Sigmoid colon (tissue), 7 donors: ENCODE measurements at regions of chr5 and their contacts with region 1.

Region 1: DNA sequence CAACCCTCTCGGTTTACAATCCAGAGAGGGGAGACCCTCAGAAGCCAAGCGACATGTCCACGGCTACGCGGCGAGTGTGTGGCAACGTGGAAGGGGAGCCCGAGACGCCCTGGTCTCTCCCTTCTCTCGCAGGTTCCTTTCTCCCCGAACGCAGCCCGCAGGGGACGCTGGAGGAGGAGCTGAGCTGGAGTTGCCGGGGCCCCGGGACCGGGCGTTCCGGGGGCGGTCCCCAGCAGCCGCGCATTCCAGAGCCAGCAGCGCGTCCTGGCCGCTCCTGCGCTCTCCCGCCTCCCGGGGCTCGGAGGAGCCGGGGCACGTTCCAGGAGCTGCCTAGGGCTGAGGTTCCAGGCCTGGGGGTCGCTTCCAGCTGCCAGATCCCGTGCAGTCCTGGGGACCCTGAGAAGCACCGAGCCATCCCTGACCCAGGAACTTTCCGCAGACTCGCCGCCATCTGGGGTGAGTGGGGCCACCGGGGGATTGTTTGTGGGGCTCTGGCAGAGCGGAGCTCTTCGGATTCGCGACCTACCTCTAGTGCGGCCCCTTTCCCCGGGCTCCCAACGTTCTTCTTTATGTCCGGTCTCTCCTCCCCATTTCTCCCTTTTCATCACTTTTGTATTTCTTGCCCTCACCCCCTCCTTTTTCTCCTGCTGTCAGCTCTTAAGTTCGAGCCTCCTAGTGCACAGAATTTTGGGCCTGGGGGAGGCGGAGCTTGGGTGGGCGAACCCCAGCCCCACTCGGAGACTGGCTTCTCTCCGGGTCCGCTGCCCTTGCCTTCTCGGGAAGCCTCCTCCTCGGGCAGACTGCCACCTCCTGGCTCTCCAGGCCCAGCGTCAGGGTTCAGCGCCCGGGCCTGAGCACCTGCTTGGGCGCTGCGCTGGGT is at the start of gene SMIM3:
- DNase-seq: peak; percentile 94
- H3K4me3 ChIP-seq: peak within 1 kb of the TSS; percentile 70 to 81 (median 74)
- H3K27ac ChIP-seq: peak within 1 kb of the TSS; percentile 91 to 95 (median 94)
- H3K4me1 ChIP-seq: peaks cover 0 to 53% (median 48%) of the 10 kb centered on the region in 4 donors
- H3K27me3 ChIP-seq: no peaks in the 10 kb centered on the region
- CTCF ChIP-seq: peak in 2 of 4 experiments; percentile 13 to 23
- EP300 ChIP-seq: no peak
- POLR2A ChIP-seq: peak; percentile 75 to 78
- total RNA-seq, gene SMIM3: 29.6 to 46.7 (median 43.6) TPM

Region 2: GRCh38 chr5:150700594-150701293 is 78.0 kb before region 1 on chr5 and contains the start of gene RBM22:
- intact Hi-C with region 1: loop called (anchors 2 kb)
- DNase-seq: peak; percentile 96
- H3K4me3 ChIP-seq: peak within 1 kb of the TSS; percentile 75 to 96 (median 92)
- H3K27ac ChIP-seq: peak within 1 kb of the TSS; percentile 94 to 98 (median 96)
- H3K4me1 ChIP-seq: peaks cover 0 to 22% (median 16%) of the 10 kb centered on the region in 4 donors
- H3K27me3 ChIP-seq: no peaks in the 10 kb centered on the region
- CTCF ChIP-seq: peak; percentile 52 to 73 (median 63)
- EP300 ChIP-seq: peak in 1 of 4 donors; percentile 18
- POLR2A ChIP-seq: peak; percentile 56 to 60
- total RNA-seq, gene RBM22: 30.0 to 34.1 (median 31.8) TPM

Region 3: DNA sequence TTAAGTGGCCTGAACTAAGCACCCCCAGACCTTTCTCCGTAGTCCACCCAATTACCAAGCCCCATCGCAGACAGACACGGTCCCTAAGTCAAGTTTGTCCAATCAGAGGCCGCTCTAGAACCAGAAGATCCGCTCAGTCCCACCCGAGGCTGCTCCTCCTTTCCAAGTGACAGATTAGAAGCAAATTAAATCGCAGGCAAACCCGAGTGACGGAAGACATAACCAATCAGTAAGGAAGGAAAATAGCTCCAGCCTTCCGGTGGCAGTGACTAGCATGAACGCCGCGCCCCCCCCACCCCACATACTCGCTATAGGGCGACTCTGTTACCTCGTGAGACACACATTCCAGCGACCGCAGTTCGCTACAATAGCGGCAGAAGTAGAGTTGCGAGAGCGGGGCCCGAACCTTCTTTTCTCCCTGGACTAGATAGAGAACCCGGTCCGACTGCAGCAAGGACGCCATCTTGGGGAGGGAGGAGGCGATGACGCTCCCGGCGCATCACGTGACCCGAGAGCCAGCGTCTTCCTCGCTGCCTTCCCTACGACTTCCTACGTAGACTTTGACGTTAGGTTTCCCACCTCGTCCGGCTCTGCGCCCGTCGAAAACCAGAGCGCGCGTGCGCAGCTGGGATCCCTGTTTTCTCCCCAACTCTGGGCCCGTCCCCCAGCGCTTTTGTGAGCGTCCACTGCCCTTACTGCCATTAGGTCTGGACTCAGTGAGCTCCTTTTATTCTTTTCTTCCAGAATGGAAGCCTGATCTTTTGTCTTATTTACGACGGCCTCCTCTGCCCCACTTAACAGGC is 20.0 kb before region 1 on chr5 and contains the start of gene DCTN4:
- intact Hi-C with region 1: loop called (anchors 1 kb)
- DNase-seq: peak; percentile 99
- H3K4me3 ChIP-seq: peak within 1 kb of the TSS; percentile 57 to 69 (median 66)
- H3K27ac ChIP-seq: peak within 1 kb of the TSS; percentile 93 to 95 (median 94)
- H3K4me1 ChIP-seq: peaks cover 0 to 27% (median 15%) of the 10 kb centered on the region in 4 donors
- H3K27me3 ChIP-seq: no peaks in the 10 kb centered on the region
- CTCF ChIP-seq: no peak
- EP300 ChIP-seq: peak in 2 of 4 donors; percentile 29 to 79
- POLR2A ChIP-seq: peak; percentile 37 to 39
- total RNA-seq, gene DCTN4: 51.0 to 56.0 (median 53.7) TPM

Region 4: DNA sequence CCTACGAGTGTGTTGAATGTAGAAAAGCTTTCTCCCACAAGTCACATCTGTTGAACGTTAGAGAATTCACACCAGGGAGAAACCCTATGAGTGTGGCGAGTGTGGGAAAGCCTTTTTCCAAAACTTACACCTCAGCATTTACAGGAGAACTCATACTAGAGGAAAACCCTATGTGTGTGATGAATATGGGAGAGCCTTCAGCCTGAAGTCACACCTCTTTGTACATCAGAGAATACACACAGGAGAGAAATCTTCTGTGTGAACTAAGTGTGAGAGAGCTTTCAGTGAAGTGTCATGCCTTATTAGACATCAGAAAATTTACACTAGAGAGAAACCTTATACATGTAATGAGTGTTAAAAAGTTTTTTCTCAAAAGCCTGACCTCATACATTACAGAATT is 199.8 kb after region 1 on chr5:
- intact Hi-C with region 1: no loop called
- DNase-seq: no peak
- H3K4me3 ChIP-seq: no peak overlapping the region
- H3K27ac ChIP-seq: no peak overlapping the region
- H3K4me1 ChIP-seq: no peaks in the 10 kb centered on the region
- H3K27me3 ChIP-seq: no peaks in the 10 kb centered on the region
- CTCF ChIP-seq: no peak
- EP300 ChIP-seq: no peak
- POLR2A ChIP-seq: no peak

Region 5: DNA sequence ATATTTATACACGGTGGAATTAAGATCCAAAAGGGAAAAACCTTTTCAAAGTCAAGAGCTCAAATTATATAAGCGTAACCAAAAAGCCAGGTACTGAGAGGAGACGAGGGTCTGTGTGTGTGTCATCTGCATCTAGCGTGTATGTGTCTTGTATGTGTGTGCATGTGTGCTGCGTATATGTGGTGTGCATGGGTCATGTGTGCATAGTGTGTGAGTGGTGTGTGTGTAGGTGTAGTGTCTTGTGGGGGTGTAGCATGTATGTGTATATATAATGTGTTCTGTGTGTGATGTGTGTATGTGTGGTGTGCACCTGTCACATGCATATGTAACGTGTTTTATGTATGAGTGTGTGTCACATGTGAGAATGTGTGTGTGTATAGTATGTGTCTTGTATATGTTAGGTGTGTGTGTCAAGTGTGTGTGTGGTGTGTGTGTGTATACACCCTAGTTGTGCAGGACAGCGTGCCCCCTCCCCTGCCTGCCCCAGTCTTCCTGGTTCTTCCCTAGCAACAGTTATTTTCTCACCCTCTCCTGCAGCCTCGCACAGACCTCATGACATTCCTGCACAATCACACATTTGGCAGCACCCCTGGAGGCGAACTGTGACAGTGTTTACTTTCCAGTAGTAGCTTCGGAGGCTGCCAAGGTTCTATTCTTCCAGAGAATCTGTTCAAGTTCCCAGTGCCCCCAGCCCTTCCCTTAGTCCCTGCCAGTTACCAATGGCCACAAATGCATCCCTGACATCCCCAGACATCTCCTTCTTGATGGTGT is 329.2 kb after region 1 on chr5:
- intact Hi-C with region 1: loop called (anchors 5 kb)
- DNase-seq: peak; percentile 94
- H3K4me3 ChIP-seq: no peak overlapping the region
- H3K27ac ChIP-seq: peak overlapping the region; percentile 75 to 94 (median 84)
- H3K4me1 ChIP-seq: peaks cover 0 to 65% (median 54%) of the 10 kb centered on the region in 4 donors
- H3K27me3 ChIP-seq: no peaks in the 10 kb centered on the region
- CTCF ChIP-seq: peak in 3 of 4 experiments; percentile 4 to 29 (median 28)
- EP300 ChIP-seq: peak in 3 of 4 donors; percentile 47 to 88 (median 82)
- POLR2A ChIP-seq: no peak